ENCODE measurements at regions of chr2 and their contacts with region 1.

Region 1: DNA sequence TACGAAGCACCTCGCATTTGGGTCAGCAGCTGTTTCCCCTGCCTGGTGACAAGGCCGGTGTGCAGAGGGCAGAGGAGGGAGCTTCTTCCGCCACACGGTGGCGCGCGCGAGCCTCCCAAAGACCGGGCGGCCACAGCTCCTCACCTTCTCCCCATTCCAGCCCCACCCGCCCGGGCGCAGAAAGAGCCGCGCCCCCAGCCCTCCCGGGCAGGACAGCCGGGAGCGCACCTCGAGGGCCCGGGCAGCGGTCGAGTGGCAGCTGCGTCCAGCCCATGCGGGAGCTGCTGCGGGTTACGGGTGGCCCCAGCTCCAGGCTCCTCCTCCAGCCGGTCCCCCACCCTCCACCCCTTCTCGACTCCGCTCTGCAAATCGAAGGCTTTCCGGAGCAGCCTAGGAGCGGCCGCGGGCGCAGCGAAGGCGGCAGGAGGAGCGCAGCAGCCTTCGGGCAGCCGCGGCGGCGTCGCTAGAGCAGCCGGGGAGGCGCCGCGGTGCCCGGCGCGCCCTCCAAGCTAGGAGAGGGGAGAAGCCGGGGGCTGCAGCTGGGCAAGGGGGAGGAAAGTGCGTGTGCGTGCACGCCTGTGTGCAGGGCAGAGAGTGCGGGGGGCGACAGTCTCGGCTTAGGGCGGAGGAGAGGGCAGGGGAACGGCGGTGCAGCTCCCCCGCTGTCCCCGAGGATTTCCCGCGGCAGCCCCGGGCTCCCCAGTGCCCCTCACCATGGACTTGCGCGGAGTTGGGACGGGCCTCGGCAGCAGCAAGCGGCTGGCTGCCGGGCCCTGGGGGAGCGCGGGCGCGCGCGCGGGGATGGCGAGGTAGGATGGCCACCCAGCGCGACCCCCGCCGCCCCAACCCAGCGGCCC is at the start of gene CCDC85A:
- DNase-seq: peak; percentile 92
- ATAC-seq: peak; percentile 94
- total RNA-seq, gene CCDC85A: 5.5 TPM

Region 2: GRCh38 chr2:56474412-56475158 is 290.7 kb after region 1 on chr2:
- intact Hi-C with region 1: loop called (anchors 10 kb)
- DNase-seq: no peak
- ATAC-seq: peak; percentile 97

Region 3: GRCh38 chr2:56754066-56754615 is 570.3 kb after region 1 on chr2:
- intact Hi-C with region 1: loop called (anchors 5 kb)
- DNase-seq: peak; percentile 70
- ATAC-seq: peak; percentile 98

Region 4: DNA sequence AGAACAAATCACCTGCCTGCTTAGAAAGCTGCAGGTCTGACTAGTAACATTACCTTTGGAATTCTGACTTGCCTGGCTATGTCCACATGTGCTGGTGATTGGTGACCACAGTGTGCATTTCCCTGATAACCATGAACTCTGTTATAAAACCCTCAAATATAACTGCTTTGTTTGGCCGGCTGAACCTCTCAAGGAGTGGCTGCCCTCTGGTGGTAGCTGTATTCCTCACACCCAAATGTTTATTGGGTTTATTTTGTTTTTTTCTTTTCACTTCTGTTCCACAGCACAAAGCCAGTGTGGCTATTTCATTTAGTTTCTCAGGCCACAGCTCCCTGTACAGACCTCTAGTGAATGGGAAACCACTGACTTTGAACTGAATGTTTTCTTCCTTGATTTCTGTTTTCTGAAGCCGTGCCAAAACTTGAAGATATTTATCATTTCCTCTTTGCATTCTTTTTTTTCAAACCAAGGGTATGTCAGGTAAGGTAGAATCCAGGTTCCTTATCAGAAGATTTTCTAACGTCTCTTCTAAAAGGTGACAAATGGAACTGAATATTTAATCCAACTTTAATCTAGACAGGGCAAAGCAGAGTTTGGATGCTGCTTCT is 1313.7 kb after region 1 on chr2:
- intact Hi-C with region 1: loop called (anchors 10 kb)
- DNase-seq: no peak
- ATAC-seq: peak; percentile 35